AG04450 (cell line): ENCODE measurements at regions of chr1 and their contacts with region 1.

Region 1: DNA sequence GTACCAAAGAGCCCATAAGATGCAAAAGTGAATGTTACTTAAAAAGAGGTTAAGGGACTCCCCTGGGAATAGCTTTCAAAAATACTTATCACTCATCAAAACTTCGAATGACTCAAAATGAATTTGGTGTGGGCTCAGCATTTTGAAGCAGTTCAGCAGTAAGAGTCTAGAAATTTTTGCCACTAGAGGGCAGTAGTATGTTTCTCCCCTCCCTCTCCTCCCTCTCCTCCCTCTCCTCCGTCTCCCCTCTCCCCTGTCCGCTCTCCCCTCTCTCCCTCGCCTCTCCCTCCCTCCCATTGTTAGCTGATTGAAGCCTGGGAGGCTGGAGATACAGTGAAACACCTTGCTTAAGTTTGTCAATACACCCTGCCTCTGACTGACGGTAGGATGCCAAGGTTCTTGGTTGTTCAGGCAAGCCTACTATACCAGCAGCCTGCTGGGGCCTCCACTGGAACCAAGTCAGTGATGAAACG is 70.8 kb upstream of the TENT5C start:
- DNase-seq: peak; percentile 29
- H3K4me3 ChIP-seq: no peak overlapping the region
- H3K27ac ChIP-seq: no peak overlapping the region
- H3K27me3 ChIP-seq: no peaks in the 10 kb centered on the region
- CTCF ChIP-seq: peak; percentile 73

Region 2: DNA sequence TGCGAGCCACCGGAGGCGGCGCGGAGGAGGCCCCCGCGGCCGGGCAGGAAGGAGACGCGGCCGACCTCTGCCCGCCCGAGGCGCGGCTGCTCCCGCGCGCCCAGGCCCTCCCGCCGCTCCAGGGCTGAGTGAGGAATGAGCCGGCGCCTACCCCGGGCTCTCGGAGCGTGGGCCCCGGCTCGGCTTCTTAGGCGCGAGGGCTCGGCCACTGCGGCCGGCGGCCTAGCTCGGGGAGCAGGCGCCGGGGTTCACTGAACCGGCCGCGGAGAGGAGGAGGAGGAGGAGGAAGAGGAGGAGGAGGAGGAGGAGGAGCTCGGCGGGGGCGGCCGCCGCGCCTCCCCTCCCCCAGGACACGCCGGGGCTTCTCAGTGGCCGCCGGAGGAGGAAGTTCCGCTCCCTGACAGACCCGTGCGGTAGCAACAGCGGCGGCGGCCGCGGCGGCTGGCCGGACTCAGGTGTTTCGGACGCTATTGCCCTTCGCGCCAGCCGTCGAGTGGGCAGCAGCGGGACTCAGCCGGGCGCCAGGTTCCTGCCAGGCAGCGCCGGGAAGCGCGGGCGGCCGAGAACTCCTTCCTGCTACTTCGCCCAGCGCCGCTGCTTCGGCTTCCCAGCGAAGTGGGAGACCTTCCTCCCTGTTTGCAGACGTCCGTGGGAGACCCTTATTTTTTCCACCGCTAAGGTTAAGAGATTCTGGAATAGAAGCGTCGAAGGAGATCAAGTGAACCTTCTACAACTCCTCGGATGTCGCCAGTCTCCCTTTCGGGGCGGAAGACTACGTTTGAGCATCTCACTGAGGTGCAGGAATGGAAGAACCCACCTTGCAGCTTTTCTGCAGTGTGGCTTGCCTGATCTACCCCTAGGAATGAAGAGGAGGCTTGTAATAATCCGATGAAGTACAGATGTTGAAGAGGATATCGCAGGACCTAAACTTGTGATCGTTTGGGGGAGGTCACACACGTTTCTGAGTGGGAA is 167.7 kb before region 1 on chr1 and contains the start of gene MAN1A2:
- CTCF ChIA-PET with region 1: no interaction called
- POLR2A ChIA-PET with region 1: no interaction called
- DNase-seq: no peak
- H3K4me3 ChIP-seq: peak within 1 kb of the TSS; percentile 90
- H3K27ac ChIP-seq: peak within 1 kb of the TSS; percentile 84
- H3K27me3 ChIP-seq: no peaks in the 10 kb centered on the region
- CTCF ChIP-seq: no peak
- polyA plus RNA-seq, gene MAN1A2: 37.2 and 40.7 TPM in 2 replicates

Region 3: DNA sequence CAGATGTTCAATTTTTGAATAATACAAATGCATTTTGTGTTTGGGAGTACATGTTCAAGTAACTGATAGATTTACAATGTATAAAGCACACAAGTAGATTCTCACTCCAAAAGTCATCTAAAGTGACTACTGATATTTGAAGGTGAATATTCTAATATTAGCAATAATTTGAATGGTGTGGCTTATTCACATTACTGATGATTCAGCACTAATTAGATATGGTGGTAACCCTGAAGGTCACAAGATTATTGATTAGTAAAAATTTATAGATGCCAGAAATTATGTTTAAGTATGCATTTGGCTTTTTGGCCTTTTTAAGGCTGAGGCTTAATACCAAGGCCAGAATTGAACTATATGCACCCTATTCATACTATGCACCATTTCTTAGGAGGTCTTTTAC is 18.4 kb after region 1 on chr1:
- CTCF ChIA-PET with region 1: interaction called, 78 read pairs
- POLR2A ChIA-PET with region 1: no interaction called
- DNase-seq: no peak
- H3K4me3 ChIP-seq: no peak overlapping the region
- H3K27ac ChIP-seq: no peak overlapping the region
- H3K27me3 ChIP-seq: peaks cover 5% of the 10 kb centered on the region
- CTCF ChIP-seq: no peak

Region 4: GRCh38 chr1:117674521-117675397 is 139.7 kb after region 1 on chr1:
- CTCF ChIA-PET with region 1: interaction called, 13 read pairs
- POLR2A ChIA-PET with region 1: no interaction called
- DNase-seq: no peak
- H3K4me3 ChIP-seq: no peak overlapping the region
- H3K27ac ChIP-seq: no peak overlapping the region
- H3K27me3 ChIP-seq: no peaks in the 10 kb centered on the region
- CTCF ChIP-seq: peak; percentile 55

Region 5: DNA sequence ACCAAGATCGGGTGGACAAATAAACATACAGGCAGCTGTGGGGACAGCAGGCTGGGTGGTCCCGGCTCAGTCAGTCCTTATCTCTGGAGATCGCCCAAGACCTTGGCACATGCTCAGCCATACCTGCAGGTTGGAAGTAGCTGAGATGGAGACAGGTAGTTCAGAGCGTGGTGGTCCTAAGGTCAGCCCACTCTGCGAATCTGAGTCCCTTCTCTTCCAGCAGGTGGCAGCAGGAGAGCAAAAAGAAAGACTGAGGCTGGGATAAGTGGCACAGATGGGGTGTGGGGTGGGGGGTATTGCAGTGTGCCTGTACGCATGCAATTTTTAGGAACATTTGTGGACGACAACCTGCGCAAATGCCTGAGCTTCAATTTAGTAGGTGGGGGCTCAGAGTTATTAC is 175.7 kb after region 1 on chr1:
- CTCF ChIA-PET with region 1: interaction called, 11 read pairs
- POLR2A ChIA-PET with region 1: no interaction called
- DNase-seq: no peak
- H3K4me3 ChIP-seq: no peak overlapping the region
- H3K27ac ChIP-seq: no peak overlapping the region
- H3K27me3 ChIP-seq: no peaks in the 10 kb centered on the region
- CTCF ChIP-seq: peak; percentile 42

Region 6: DNA sequence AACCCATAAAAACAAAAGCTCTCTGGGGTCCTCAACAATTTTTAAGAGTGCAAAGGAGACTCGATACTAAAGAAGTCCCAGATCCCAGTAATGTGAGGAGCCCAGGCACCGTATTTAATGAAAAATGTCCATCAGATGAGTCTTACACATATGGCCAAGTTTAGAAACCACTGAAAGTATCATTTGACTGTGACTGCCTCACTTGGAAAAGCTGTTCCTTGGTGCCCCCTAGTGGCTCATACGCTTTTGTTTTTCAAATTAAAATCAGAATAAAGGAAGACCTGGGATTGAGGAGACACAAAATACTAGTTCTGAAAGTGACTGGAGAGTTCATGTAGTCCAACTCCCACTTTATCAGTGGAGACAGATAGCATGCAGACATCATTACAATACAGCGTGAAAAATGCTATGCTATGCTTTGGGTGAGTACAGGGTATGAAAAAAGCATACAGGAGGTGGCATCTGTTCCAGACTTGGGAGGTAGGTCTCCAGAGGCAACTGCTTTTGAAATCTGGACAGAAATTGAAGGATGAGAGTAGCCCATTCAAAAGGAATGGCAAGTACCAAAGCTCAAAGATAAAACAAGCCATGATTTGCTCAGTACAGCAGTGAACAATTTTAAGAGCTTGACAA is 360.6 kb after region 1 on chr1:
- CTCF ChIA-PET with region 1: interaction called, 105 read pairs
- POLR2A ChIA-PET with region 1: no interaction called
- DNase-seq: peak; percentile 85
- H3K4me3 ChIP-seq: no peak overlapping the region
- H3K27ac ChIP-seq: no peak overlapping the region
- H3K27me3 ChIP-seq: no peaks in the 10 kb centered on the region
- CTCF ChIP-seq: peak; percentile 79

Region 7: DNA sequence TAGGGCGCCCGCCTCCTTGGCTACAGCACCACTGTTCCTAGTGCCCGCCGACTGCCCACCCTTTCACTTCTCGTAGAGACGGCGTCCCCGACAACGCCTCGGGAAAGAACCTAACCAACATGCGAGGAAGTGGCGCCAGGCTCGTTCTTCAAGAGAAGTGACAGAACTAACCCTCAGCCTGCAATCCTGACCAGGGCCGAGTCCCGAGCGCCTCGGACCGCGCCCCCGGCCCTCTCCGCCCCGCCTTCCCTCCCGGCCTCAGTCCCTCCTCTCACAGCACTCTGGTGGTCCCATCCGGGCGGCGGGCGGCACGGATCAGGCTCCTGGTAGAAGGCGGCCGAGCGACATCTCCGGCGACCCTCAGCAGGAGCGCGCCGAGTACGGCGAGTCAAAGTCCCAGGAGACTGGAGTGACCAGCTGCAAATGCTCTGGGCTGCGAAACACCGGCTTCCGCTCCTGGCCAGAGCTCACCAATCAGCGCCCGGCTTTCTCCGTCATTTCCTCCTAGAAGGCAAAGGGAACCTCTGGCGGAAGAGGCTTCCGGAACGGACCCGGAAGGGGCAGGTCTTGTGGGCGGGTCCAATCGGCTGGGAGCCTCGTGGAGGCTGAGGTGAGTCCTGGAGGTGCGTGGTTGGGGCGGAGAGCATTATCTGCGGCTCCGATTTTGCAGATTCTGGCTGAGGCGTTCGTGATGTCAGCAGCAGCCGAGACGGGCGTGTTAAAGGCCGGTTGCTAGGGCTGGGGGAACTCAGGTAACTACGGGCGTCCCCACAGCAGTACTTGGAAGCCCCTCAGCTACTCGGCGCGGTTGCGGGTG is 394.4 kb after region 1 on chr1 and contains the starts of genes GDAP2 and WDR3:
- CTCF ChIA-PET with region 1: interaction called, 28 read pairs
- POLR2A ChIA-PET with region 1: no interaction called
- DNase-seq: peak; percentile 87
- H3K4me3 ChIP-seq: peak within 1 kb of the TSS; percentile 97
- H3K27ac ChIP-seq: peak within 1 kb of the TSS; percentile 73
- H3K27me3 ChIP-seq: no peaks in the 10 kb centered on the region
- CTCF ChIP-seq: no peak
- polyA plus RNA-seq, gene GDAP2: 18.9 and 25.4 TPM in 2 replicates
- polyA plus RNA-seq, gene WDR3: 33.4 and 41.4 TPM in 2 replicates